ENCODE measurements at regions of chr11 and their contacts with region 1.

Region 1: GRCh38 chr11:124758317-124759203 is 3.5 kb downstream of the ESAM start:
- DNase-seq: peak; percentile 81 to 90
- H3K4me3 ChIP-seq: peak overlapping the region; percentile 77 to 94
- H3K27ac ChIP-seq: peak overlapping the region; percentile 95 to 98
- H3K4me1 ChIP-seq: peaks cover 0 to 59% (median 38%) of the 10 kb centered on the region in 4 donors
- H3K27me3 ChIP-seq: no peaks in the 10 kb centered on the region
- CTCF ChIP-seq: peak; percentile 83 to 87

Region 2: DNA sequence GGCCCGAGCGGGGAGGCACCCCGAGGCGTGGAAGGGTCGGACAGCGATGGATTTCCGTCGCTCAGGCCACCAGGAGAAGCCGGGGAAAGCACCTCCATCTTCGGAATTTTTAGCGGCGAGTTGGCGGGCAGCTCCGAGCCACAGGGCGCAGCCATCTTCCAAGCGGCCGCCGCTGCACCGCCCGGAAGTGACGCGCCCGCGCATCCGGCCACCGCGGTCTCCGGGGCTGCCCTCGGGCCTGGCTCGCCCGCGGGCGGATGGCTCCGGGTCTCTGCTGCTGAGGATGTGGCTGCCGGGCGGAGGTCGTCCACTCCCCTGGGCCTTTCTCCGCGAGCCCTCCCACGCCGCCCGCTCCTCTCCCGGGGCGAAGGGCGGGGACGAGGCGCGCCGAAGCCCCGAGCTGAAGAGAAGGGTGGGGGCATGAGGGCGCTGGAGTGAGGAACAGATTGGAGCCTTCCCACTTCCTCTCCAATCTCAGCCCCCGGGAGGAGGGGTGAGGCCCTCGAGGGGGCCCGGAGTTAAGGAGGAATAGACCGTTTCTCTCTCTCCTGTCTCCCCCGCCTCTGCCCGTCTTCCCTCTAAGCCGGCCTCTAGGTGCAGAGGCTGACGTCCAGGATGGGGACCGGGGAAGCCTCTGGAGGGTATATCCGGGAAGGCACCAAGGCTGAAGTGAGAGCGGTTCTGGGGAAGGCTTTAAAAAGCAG is 41.8 kb after region 1 on chr11 and contains the start of gene MSANTD2:
- intact Hi-C with region 1: loop called (anchors 5 kb)
- DNase-seq: peak; percentile 79 to 88
- H3K4me3 ChIP-seq: peak within 1 kb of the TSS; percentile 98 to 100
- H3K27ac ChIP-seq: peak within 1 kb of the TSS; percentile 99
- H3K4me1 ChIP-seq: peaks cover 0 to 37% (median 21%) of the 10 kb centered on the region in 4 donors
- H3K27me3 ChIP-seq: no peaks in the 10 kb centered on the region
- CTCF ChIP-seq: no peak

Region 3: DNA sequence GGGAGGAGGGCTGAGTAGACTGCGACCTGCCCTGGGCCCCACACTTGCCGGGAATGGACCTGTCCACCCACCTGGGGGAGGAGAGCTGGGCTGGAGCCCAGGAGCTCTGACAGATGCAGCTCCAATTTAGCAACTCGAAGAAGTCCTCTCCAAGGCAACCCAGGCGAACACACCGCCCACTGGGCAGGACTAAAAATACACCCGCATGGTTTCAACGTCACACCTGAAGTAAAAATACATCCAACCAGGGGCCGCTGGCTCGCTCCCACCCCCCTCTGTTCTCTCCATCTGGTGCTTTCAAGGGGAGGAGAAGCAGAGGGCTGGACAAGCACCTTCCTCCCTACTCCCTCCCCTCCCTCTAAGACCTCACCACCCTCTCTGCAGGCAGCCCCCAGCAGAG is 617.6 kb after region 1 on chr11:
- intact Hi-C with region 1: loop called (anchors 10 kb)
- DNase-seq: peak; percentile 68 to 94
- H3K4me3 ChIP-seq: peak overlapping the region in 1 of 2 donors; percentile 23
- H3K27ac ChIP-seq: peak overlapping the region; percentile 74 to 77
- H3K4me1 ChIP-seq: peaks cover 4 to 45% (median 35%) of the 10 kb centered on the region in 4 donors
- H3K27me3 ChIP-seq: no peaks in the 10 kb centered on the region
- CTCF ChIP-seq: no peak

Region 4: GRCh38 chr11:125625630-125626287 is 867.2 kb after region 1 on chr11:
- intact Hi-C with region 1: loop called (anchors 10 kb)
- DNase-seq: peak; percentile 81 to 91
- H3K4me3 ChIP-seq: peak overlapping the region; percentile 63 to 76
- H3K27ac ChIP-seq: peak overlapping the region; percentile 92
- H3K4me1 ChIP-seq: peaks cover 0 to 49% (median 25%) of the 10 kb centered on the region in 4 donors
- H3K27me3 ChIP-seq: no peaks in the 10 kb centered on the region
- CTCF ChIP-seq: no peak

Measured in tibial artery (tissue), 4 donors.